ENCODE measurements at regions of chr12 and their contacts with region 1.

Region 1: DNA sequence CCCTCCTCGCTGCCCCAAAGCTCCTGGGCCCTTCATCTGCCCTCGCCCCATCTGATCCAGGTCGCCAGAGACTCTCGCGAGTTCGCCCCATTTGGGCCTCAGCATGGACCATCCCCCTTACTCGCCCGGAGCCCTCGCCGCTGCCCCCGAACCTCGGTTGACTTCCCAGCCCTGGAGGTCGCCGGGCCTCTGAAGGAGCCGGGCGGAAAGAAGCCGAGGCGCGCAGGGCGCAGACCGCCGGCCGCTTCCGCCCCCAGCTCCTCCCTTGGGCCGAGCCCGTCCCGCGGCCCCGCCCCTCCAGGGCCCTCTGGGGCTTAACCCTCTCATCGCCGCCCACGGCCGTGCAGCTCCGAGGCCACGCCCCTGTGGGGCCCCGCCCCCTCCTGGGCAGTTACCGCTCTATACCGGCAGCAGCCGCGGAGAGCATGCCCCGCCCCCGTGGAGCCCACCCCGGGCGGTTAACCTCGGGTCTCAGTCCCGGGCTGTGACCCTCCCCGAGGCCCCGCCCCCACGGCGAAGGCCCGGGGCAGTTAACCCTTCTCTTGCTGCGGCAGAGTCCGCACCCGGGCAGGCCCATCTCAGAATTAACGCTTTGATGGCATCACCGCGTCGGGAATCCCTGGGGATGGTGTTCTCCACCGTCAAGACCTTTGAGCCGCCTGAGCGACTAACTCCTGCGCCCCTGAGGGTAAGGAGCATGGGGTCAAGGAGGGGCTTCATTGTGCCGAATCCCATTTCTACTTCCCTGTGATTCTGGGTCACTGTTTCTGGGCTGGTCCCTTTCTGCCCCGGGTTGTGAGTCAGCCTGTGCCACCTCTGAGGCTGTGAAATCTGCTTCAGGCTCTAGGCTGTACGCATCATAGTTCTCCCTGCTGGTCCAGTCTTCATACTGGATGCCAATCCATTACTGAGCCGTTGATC is at the start of gene SPSB2:
- DNase-seq: no peak
- H3K4me3 ChIP-seq: peak within 1 kb of the TSS; percentile 78
- CTCF ChIP-seq: no peak

Region 2: DNA sequence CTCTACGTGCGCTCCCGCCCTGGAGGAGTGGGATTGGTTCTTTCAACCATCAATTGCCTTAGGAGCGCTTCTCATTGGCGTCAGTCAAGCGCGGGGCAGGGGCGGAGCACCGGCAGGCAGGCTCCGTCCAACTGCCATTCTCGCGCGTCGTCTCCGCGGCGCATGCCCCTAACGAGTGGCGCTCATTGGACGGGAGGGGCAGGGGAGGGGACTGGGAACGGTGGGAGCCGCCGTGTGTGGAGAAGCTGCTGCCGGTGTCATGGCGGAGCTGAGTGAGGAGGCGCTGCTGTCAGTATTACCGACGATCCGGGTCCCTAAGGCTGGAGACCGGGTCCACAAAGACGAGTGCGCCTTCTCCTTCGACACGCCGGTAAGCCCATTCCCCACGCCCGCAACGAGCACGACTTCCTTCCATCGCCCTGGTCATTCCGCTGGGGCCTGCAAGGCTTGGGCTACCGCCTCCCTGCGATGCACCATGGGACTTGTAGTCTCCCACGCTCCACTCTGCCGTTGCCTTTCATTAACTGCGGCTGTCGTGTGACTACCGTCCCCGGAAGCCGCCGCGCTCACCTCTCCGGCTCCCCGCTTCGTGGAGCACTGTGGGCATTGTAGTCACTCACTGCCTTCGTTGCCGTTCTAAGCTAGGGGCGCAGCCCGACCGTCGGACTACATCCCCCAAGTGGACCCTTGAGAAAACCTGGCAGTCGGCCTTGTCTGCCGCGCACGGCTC is 21.3 kb before region 1 on chr12 and contains the start of gene USP5:
- CTCF ChIA-PET with region 1: interaction called, 63 read pairs
- POLR2A ChIA-PET with region 1: interaction called, 164 read pairs
- DNase-seq: peak; percentile 97
- H3K4me3 ChIP-seq: peak within 1 kb of the TSS; percentile 98
- CTCF ChIP-seq: no peak

Region 3: DNA sequence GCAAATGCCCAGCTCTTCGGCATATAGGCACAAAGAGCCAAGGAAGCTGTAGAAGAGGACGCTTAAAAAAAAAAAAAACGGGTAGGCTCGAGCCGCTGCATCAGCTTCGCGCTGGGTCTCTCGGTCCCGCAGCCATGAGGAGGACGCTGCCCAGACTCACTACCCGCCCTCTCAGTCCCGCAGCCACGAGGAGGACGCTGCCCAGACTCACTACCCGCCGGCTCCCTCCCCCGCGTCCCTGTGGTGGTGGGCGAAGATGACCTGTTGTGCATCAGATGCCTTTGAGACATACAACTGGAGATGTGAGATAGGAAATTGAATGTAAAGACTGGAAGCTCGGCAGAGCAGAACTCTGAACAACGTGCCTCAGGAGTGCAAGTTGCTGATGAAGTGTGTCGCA is 11.2 kb after region 1 on chr12:
- CTCF ChIA-PET with region 1: interaction called, 88 read pairs
- POLR2A ChIA-PET with region 1: interaction called, 11 read pairs
- DNase-seq: no peak
- H3K4me3 ChIP-seq: no peak overlapping the region
- CTCF ChIP-seq: no peak

Region 4: DNA sequence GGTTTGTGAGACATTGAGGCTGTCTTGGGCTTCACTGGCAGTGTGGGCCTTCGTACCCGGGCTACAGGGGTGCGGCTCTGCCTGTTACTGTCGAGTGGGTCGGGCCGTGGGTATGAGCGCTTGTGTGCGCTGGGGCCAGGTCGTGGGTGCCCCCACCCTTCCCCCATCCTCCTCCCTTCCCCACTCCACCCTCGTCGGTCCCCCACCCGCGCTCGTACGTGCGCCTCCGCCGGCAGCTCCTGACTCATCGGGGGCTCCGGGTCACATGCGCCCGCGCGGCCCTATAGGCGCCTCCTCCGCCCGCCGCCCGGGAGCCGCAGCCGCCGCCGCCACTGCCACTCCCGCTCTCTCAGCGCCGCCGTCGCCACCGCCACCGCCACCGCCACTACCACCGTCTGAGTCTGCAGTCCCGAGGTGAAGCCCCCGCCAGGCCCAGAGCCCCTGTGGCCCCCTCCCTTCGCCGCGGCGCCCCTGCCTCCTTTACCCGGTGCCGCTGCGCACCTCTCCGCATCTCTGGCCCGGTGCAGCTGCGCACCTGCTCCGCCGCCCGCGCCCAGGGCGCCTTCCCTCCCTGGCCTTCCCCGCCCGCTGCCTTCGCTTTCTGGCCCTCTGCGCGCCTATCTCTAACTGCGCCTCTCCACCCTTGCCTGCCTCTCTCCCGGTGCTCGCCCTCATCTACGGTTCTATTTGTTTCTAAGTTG is 41.0 kb after region 1 on chr12 and contains the start of gene ENO2:
- CTCF ChIA-PET with region 1: interaction called, 16 read pairs
- POLR2A ChIA-PET with region 1: interaction called, 3 read pairs
- DNase-seq: no peak
- H3K4me3 ChIP-seq: peak within 1 kb of the TSS; percentile 69
- CTCF ChIP-seq: no peak

Region 5: DNA sequence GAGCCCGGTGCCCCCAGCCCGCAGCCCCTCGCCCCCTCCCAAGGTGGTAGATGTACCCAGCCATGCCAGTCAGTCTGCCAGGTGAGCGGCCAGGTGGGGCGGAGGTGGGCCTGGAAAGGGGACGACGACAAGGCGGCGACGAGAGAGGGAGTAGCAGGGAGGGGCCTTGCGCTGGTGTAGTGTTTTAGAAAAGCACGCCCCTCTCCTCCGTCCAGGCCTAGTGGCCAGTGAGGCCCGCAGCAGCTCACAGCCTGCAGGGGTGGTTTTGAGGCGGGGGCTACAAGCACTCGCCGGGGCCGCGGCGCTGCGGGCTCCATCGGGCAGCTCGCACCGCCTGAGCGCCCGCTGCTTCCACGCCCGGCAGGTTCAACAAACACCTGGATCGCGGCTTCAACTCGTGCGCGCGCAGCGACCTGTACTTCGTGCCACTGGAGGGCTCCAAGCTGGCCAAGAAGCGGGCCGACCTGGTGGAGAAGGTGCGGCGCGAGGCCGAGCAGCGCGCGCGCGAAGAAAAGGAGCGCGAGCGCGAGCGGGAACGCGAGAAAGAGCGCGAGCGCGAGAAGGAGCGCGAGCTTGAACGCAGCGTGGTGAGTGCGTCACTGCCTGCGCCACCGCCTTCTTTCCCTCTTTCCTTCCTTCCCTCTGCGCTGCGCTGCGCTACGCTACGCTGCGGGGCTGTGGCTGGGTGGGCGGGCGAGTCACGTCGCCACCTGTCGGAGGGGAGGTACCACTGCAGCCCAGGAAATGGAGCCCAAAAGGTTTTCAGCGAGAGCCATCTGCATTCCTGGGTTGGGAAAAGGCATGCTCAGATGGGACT is 64.3 kb after region 1 on chr12:
- CTCF ChIA-PET with region 1: interaction called, 27 read pairs
- POLR2A ChIA-PET with region 1: interaction called, 6 read pairs
- DNase-seq: no peak
- H3K4me3 ChIP-seq: peak overlapping the region; percentile 63
- CTCF ChIP-seq: peak; percentile 96

Region 6: GRCh38 chr12:7433276-7433822 is 560.0 kb after region 1 on chr12:
- CTCF ChIA-PET with region 1: no interaction called
- POLR2A ChIA-PET with region 1: no interaction called
- DNase-seq: peak; percentile 23
- H3K4me3 ChIP-seq: no peak overlapping the region
- CTCF ChIP-seq: no peak